Dendritic cell treated with granulocyte-macrophage colony-stimulating factor and Interleukin-4, amounts not matched to agents 40 ng/mL and 50 ng/mL, for 4 days (primary cell): ENCODE measurements at regions of chr10 and their contacts with region 1.

Region 1: DNA sequence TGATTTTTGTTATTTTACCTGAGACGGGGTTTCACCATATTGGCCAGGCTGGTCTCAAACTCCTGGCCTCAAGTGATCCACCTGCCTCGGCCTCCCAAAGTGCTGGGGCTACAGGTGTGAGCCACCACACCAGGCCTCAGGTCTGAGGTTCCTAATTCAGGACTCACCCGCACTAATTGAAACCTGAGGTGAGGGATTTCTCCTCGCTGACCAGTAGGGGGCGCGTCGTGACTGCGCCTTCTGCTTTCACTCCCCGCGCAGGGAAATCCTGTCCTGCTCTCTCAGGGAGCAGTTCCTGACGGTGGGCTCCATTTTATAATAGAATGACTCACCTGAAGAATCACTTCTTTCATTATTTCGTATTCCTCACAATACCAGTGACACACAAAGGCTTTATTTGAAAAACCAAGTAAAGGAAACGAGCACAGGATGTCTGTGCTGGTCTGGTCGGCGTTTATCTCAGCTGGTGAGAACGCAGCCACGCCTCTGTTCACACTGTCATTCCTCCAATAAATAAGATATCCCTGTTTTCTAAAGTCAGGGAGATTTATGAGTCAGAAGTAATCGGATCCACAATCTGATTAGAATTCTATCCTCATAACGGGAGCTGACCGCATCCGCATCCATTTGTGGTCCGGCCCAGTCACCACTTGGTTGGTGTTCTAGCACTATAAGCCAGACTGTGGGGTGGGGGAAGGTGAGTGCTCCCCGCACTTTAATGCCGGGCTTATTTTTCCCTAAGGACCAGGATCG is 35.4 kb downstream of the BAG3 start:
- H3K4me3 Mint-ChIP-seq: peak overlapping the region; percentile 30
- H3K27ac Mint-ChIP-seq: no peak overlapping the region
- H3K4me1 Mint-ChIP-seq: peaks cover 31% of the 10 kb centered on the region
- H3K27me3 Mint-ChIP-seq: peaks cover 22% of the 10 kb centered on the region

Region 2: GRCh38 chr10:119725828-119726675 is 39.4 kb after region 1 on chr10 and contains the start of gene INPP5F:
- intact Hi-C with region 1: loop called (anchors 2 kb)
- H3K4me3 Mint-ChIP-seq: peak within 1 kb of the TSS; percentile 71
- H3K27ac Mint-ChIP-seq: peak within 1 kb of the TSS; percentile 97
- H3K4me1 Mint-ChIP-seq: peaks cover 36% of the 10 kb centered on the region
- H3K27me3 Mint-ChIP-seq: no peaks in the 10 kb centered on the region

Region 3: GRCh38 chr10:119859420-119860258 is 173.0 kb after region 1 on chr10:
- intact Hi-C with region 1: loop called (anchors 2 kb)
- H3K4me3 Mint-ChIP-seq: no peak overlapping the region
- H3K27ac Mint-ChIP-seq: no peak overlapping the region
- H3K4me1 Mint-ChIP-seq: peaks cover 21% of the 10 kb centered on the region
- H3K27me3 Mint-ChIP-seq: no peaks in the 10 kb centered on the region

Region 4: GRCh38 chr10:120336911-120337540 is 650.4 kb after region 1 on chr10:
- intact Hi-C with region 1: loop called (anchors 5 kb)
- H3K4me3 Mint-ChIP-seq: no peak overlapping the region
- H3K27ac Mint-ChIP-seq: no peak overlapping the region
- H3K4me1 Mint-ChIP-seq: no peaks in the 10 kb centered on the region
- H3K27me3 Mint-ChIP-seq: no peaks in the 10 kb centered on the region